T-cell (primary cell): ENCODE measurements at regions of chr2 and their contacts with region 1.

Region 1: DNA sequence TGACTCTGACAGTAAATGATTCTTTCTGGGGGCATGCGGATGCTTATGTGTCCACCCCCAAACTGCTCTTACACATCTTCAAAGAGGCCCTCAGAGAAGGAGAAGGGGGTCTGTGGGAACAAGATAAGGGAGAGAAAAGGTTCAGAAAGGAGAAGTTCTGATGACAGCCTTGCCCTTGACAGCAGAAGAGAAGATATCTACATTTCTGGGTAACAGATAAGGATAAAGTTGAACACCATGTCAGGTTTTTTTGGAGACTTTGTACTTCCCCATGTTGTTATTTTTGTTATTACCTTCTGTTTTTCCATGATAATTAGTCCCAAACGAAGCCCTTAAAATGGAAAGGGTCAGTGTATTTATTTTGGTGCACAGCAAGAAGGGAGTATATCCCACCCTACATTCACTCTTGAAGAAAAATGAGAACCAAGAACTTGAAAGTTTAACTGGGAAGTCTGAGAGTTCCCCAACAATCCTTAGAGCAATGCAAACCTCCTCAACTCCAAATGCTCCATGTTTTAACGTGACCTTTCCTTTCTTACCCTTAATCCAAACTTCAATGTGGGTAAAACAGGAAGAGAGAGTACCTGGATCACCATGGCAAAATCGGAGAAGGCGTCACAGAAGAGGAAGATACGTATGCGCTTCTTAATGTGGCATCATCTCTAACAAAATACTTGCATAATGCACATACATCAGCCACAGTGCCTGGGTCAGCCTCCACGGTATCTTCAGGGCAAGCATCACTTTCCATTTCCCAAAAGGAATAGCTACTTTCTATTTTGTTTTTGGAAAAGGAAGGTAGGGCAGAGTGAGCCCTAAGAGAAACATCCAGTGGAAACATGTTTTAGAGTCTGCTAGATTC is 264.6 kb upstream of the STON1 start:
- DNase-seq: no peak
- ATAC-seq: no peak
- H3K4me3 ChIP-seq: no peak overlapping the region
- H3K4me3 Mint-ChIP-seq: no peak overlapping the region
- H3K27ac ChIP-seq: no peak overlapping the region
- H3K27ac Mint-ChIP-seq: no peak overlapping the region
- H3K4me1 ChIP-seq: no peaks in the 10 kb centered on the region
- H3K4me1 Mint-ChIP-seq: no peaks in the 10 kb centered on the region
- H3K27me3 ChIP-seq: no peaks in the 10 kb centered on the region
- H3K27me3 Mint-ChIP-seq: peaks cover 0 to 3% of the 10 kb centered on the region in 2 donors

Region 2: DNA sequence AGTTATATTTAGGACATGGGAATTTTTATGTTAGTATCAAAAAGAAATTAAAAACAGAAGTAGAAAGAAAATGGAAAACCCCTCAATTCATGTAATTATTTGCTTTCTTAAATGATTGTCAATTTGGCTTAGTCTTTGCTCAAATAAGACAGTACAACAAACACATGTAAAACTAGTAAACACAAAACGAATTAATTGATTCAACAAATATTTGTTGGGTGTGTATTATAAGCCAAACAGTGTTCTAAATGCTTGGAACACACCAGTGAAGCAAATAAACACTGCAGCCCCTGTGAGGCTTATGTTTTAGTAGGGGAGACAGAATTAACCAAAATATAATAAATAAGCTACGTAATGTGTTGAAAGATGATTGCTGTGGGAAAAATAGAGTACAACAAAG is 30.0 kb after region 1 on chr2:
- CTCF ChIA-PET with region 1: no interaction called
- POLR2A ChIA-PET with region 1: no interaction called
- DNase-seq: no peak
- ATAC-seq: no peak
- H3K4me3 ChIP-seq: no peak overlapping the region
- H3K4me3 Mint-ChIP-seq: no peak overlapping the region
- H3K27ac ChIP-seq: no peak overlapping the region
- H3K27ac Mint-ChIP-seq: no peak overlapping the region
- H3K4me1 ChIP-seq: peaks cover 0 to 7% of the 10 kb centered on the region in 2 experiments
- H3K4me1 Mint-ChIP-seq: peaks cover 6 to 7% (median 6%) of the 10 kb centered on the region in 3 donors
- H3K27me3 ChIP-seq: no peaks in the 10 kb centered on the region
- H3K27me3 Mint-ChIP-seq: no peaks in the 10 kb centered on the region

Region 3: GRCh38 chr2:48306409-48307284 is 41.2 kb after region 1 on chr2:
- CTCF ChIA-PET with region 1: no interaction called
- POLR2A ChIA-PET with region 1: interaction called in 1 of 2 experiments, 13 read pairs
- DNase-seq: no peak
- ATAC-seq: no peak
- H3K4me3 ChIP-seq: no peak overlapping the region
- H3K4me3 Mint-ChIP-seq: no peak overlapping the region
- H3K27ac ChIP-seq: no peak overlapping the region
- H3K27ac Mint-ChIP-seq: no peak overlapping the region
- H3K4me1 ChIP-seq: no peaks in the 10 kb centered on the region
- H3K4me1 Mint-ChIP-seq: peaks cover 5 to 7% (median 6%) of the 10 kb centered on the region in 3 donors
- H3K27me3 ChIP-seq: no peaks in the 10 kb centered on the region
- H3K27me3 Mint-ChIP-seq: no peaks in the 10 kb centered on the region